Activated T-helper 1 cell treated with anti-CD3 and anti-CD28 coated beads, Interleukin-12 subunit alpha, Interleukin-12 subunit beta, Interleukin-2, Interleukin-4 antibody, amounts not matched to agents 30 ng/mL and 10 ng/mL and 1 ng/mL, durations not matched to agents 14 hours and 24 hours and 36 hours (primary cell): ENCODE measurements at regions of chr16 and their contacts with region 1.

Region 1: DNA sequence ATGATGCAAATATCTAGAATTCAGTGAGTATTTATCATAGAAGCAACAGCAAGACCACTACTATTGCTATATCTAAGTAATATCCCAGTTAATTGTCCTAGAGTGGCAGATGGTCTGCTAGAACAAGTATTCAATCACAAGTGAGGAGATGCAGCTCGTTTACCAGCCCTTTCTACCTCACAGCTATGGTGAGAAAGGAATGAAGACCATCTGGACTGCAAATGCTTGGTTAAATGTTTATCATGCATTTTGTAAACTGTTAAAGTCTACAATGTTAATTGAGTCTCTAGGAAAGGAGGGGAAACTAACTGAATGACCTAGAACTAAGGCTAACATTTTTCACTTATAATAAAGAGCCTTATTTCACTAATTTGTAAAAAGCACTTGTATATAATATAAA is 52.5 kb downstream of the CNOT1 start:
- DNase-seq: no peak
- H3K4me3 Mint-ChIP-seq: no peak overlapping the region
- H3K27ac Mint-ChIP-seq: no peak overlapping the region
- H3K4me1 Mint-ChIP-seq: no peaks in the 10 kb centered on the region
- H3K27me3 Mint-ChIP-seq: no peaks in the 10 kb centered on the region

Region 2: GRCh38 chr16:58499615-58500351 is 77.4 kb before region 1 on chr16 and contains the start of gene NDRG4:
- intact Hi-C with region 1: no loop called
- DNase-seq: peak; percentile 14
- H3K4me3 Mint-ChIP-seq: peak within 1 kb of the TSS; percentile 7
- H3K27ac Mint-ChIP-seq: no peak within 1 kb of the TSS
- H3K4me1 Mint-ChIP-seq: peaks cover 9% of the 10 kb centered on the region
- H3K27me3 Mint-ChIP-seq: peaks cover 4% of the 10 kb centered on the region
- total RNA-seq, gene NDRG4: 1.5 and 1.7 TPM in 2 replicates

Region 3: GRCh38 chr16:58543685-58544084 is 33.5 kb before region 1 on chr16:
- intact Hi-C with region 1: loop called (anchors 2 kb)
- DNase-seq: no peak
- H3K4me3 Mint-ChIP-seq: no peak overlapping the region
- H3K27ac Mint-ChIP-seq: no peak overlapping the region
- H3K4me1 Mint-ChIP-seq: no peaks in the 10 kb centered on the region
- H3K27me3 Mint-ChIP-seq: no peaks in the 10 kb centered on the region